Activated B cell treated with CpG ODN at 0.5 μM for 24 hours (primary cell): ENCODE measurements at regions of chr9 and their contacts with region 1.

Region 1: GRCh38 chr9:114304416-114305188 is 18.3 kb upstream of the ORM1 start:
- DNase-seq: peak; percentile 12
- ATAC-seq: no peak
- H3K4me3 Mint-ChIP-seq: no peak overlapping the region
- H3K27ac Mint-ChIP-seq: no peak overlapping the region
- H3K4me1 Mint-ChIP-seq: peaks cover 6% of the 10 kb centered on the region
- H3K27me3 Mint-ChIP-seq: no peaks in the 10 kb centered on the region
- CTCF ChIP-seq: no peak

Region 2: DNA sequence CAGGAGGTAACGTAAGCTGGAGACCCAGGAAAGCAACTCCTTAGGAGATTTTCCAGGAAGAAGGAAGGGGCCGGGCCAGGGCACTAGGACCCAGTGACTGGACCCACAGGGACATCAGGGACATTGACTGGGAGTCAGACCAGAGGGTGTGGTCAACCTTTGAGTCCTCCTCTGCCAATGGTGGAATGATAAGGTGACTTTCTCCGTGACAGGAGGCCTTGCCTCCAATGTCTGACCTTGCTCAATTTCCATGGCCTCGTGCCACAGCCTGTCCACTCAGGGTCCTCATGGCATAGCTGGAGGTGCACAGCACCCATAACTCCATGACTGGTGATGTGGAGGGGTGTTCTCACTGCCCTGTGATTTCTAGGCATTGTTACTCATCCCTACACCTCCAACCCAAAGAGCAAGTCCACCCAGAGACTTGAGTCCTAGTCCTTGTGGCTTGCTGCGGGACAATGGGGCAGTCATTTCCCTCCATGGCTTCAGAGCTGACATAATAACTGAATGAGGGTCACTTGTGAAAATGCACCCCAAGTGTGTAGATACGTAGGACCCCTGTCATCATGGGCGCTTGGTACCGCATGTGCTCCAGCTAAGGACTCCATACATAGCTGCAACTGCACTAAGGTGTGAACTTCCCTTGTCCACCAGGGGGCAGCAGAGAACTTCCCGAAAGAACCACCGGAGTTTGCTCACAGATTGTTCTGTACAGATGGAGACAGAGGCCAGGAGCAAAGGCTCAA is 222.4 kb before region 1 on chr9:
- CTCF ChIA-PET with region 1: interaction called, 3 read pairs
- POLR2A ChIA-PET with region 1: no interaction called
- intact Hi-C with region 1: loop called (anchors 1 kb)
- DNase-seq: peak; percentile 57
- ATAC-seq: peak; percentile 71
- H3K4me3 Mint-ChIP-seq: no peak overlapping the region
- H3K27ac Mint-ChIP-seq: no peak overlapping the region
- H3K4me1 Mint-ChIP-seq: no peaks in the 10 kb centered on the region
- H3K27me3 Mint-ChIP-seq: peaks cover under 1% of the 10 kb centered on the region
- CTCF ChIP-seq: peak; percentile 54

Region 3: GRCh38 chr9:114155263-114155972 is 149.2 kb before region 1 on chr9 and contains the start of gene COL27A1:
- CTCF ChIA-PET with region 1: no interaction called
- POLR2A ChIA-PET with region 1: no interaction called
- intact Hi-C with region 1: loop called (anchors 1 kb)
- DNase-seq: peak; percentile 74
- ATAC-seq: peak; percentile 91
- H3K4me3 Mint-ChIP-seq: peak within 1 kb of the TSS; percentile 81
- H3K27ac Mint-ChIP-seq: no peak within 1 kb of the TSS
- H3K4me1 Mint-ChIP-seq: peaks cover 21% of the 10 kb centered on the region
- H3K27me3 Mint-ChIP-seq: peaks cover 54% of the 10 kb centered on the region
- CTCF ChIP-seq: peak; percentile 19
- total RNA-seq, gene COL27A1: 0.33 and 0.44 TPM in 2 replicates